Right ventricle myocardium inferior (tissue), 1 donor: ENCODE measurements at regions of chr7 and their contacts with region 1.

Region 1: DNA sequence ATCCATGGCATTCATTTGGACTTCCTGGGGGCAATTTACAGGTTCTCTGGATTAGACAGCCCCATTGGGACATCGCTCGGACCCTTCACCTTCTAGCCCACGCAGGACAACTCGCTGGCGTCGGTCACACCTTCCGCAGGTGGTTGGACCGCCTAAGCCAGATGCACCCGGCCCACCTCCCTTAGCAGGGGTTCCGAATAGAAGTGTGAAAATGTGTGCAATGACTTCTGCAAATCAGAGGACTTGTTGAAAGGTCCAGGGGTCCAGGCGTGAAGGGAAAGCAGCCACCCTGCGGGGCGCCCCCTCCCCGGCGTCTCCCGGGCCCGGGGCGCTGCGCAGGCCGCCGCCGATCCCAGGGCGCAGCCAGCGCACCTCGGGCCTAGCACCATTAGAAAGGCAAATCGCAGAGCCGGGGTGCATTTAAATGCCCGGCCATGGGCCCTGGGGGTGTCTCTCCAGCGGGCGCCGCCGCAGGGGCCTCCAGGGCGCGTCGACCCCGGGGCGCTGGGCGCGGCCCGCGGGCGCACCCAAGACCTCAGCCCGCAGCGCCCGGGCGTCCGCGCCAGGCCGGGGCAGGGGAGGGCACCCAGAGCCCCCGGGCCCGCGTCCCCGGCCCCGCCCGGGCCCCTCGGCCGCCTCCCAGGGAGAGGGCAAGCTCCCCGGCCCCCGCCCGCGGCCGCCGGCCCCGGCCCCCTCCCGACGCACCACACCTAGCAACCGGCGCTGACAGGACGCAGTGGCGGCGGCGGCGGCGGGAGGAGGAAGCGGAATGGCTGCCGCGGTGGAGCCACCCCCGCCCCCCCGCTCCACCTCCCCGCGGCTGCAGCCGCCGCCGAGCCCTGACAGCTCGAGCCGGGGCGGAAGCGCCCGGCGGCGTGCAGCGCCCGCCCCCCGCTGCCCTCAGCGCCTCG is 1.2 kb downstream of the JAZF1 start:
- DNase-seq: peak; percentile 93
- ATAC-seq: peak; percentile 67

Region 2: GRCh38 chr7:28103989-28104628 is 75.3 kb before region 1 on chr7:
- intact Hi-C with region 1: loop called (anchors 2 kb)
- DNase-seq: no peak
- ATAC-seq: no peak

Region 3: DNA sequence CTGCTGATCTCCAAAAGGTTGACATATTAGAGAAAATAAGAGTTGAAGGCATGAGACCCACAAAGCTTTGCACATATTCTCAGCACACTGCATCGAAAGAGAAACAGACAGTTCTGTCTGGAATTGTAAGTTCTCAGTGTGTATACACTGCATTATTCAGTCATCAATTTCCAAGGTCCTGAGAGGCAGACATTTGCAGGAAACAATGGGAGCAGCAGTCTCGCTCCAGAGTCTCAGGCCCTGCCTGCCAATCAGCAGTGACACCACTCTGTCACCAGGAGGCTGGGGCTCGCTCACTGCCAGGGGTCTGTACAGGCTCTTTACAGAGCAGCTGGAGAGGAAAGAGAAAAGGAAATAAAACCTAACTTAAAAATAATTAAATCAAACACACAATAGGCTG is 35.1 kb before region 1 on chr7:
- intact Hi-C with region 1: no loop called
- DNase-seq: no peak
- ATAC-seq: no peak

Region 4: DNA sequence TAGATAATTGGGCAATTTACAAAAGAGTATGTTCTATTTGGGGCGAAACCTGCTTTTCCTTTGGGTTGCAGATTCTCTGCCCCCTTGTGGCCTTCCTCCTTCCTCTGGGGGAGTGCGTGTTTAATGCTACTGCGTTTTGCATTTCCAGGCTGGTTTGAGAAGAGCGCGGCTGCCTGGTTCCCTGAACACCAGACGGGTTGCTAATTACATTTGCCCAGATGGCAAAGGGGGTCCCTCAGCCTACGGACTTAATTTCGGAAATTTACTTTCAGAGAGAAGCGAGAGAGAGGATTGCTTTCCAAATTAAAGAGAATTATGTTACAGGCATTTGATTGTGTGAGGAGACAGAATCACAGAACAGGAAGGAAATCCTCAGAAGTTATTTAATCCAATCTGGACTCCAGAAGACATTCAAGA is 93.1 kb after region 1 on chr7:
- intact Hi-C with region 1: loop called (anchors 5 kb)
- DNase-seq: no peak
- ATAC-seq: peak; percentile 64